Right ventricle myocardium inferior (tissue), 1 donor: ENCODE measurements at regions of chr21 and their contacts with region 1.

Region 1: DNA sequence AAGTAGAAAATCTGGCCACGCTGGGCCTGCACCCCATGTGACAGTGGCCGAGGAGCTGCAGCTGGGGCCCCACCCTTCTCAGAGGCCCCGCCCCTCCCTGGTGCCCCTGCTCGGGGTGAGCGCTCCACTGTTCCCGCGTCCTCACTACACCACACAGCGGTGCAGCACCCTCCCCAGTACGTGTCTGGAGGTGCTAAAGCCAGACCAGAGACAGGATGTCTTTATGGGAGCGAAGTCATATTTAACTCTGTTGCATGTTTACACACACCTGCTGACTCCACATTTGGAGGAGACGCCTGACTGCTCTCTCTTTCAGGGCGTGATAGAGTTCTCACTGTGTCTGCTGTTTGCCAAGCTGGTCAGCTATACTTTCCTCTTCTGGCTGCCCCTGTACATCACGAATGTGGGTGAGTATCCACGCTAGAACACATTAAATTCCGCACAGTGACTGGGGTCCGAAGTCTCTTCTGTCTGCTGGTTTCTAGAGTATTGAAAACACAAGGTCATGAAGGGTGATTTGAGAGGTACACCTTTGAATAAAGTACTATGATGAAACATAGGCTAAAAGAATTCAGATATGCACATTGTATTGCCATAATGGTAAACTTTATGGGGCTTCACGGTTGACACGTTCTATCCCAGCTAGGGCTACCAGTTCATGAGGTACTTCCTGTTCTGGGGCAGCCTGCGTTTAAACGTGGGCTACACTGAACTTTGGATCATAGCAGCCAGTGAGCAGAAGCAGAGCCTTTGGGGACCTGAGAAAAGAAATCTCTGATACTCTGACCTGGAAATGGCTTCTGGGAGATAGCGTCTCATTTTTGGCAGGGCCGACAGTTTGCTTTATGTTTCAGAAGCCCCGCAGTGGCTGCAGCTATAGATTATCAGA is 48.4 kb downstream of the SLC37A1 start:
- DNase-seq: no peak
- ATAC-seq: no peak

Region 2: GRCh38 chr21:42360317-42360716 is 201.7 kb before region 1 on chr21:
- intact Hi-C with region 1: no loop called
- DNase-seq: no peak
- ATAC-seq: no peak

Region 3: GRCh38 chr21:42463861-42464520 is 98.0 kb before region 1 on chr21:
- intact Hi-C with region 1: no loop called
- DNase-seq: no peak
- ATAC-seq: no peak

Region 4: DNA sequence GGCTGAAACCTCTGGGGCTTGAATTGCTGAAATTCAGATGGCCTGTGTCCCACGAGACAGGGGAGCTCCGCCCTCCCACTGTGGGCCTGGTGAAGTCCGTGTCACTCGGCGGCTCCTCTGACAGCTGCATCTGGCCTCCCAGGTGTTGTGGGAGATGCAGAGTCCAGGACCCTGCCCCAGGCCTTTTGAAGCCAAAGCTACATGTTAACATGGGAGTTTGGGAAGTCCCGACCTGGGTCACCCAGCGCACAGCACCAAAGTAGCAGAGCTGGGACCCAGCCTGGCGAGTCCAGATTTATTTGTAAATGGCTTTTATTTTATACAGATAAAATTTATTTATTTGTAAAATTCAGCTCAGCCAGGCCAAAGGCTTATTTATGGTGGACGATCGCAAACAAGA is 19.4 kb before region 1 on chr21:
- intact Hi-C with region 1: loop called (anchors 2 kb)
- DNase-seq: no peak
- ATAC-seq: no peak

Region 5: DNA sequence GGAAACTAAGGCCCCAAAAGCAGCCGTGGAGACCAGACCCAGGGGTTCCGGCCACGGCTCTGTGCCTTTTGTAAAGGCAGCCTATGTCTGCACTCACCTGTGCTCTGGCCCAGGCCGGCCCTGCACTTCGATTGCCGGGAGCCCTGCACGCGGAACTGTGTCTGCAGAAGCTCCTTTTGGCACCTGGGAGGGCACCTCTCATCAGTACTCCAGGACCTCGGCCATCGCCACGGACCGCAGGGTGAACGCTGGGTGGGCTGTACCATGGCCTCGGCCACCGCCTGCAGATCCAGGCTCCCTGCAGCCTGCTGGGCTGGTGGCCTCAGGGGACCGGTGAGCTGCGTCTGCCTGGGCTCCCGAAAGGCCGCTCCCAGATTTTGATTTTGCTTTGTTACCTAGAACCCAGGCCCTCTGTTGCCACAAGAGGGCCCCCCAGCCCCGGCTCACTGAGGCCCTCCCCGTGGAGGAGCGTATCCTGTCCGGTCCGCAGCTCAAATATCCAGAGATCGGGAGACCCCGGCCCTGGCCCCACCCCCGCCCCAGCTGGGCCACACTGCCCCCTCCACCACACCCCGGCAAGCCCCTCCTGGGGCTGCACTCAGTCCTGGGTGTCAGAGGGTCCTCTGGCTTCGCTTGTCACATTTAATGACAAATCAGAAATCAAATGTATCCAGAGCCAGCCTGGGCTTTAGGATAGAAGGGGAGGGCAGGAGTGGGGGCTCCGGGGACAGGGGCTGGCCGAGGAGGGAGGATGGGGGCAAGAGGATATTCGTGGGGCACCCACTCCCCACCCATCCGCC is 31.2 kb after region 1 on chr21:
- intact Hi-C with region 1: no loop called
- DNase-seq: peak; percentile 85
- ATAC-seq: peak; percentile 85